GM10248 (cell line): ENCODE measurements at regions of chr1 and their contacts with region 1.

Region 1: DNA sequence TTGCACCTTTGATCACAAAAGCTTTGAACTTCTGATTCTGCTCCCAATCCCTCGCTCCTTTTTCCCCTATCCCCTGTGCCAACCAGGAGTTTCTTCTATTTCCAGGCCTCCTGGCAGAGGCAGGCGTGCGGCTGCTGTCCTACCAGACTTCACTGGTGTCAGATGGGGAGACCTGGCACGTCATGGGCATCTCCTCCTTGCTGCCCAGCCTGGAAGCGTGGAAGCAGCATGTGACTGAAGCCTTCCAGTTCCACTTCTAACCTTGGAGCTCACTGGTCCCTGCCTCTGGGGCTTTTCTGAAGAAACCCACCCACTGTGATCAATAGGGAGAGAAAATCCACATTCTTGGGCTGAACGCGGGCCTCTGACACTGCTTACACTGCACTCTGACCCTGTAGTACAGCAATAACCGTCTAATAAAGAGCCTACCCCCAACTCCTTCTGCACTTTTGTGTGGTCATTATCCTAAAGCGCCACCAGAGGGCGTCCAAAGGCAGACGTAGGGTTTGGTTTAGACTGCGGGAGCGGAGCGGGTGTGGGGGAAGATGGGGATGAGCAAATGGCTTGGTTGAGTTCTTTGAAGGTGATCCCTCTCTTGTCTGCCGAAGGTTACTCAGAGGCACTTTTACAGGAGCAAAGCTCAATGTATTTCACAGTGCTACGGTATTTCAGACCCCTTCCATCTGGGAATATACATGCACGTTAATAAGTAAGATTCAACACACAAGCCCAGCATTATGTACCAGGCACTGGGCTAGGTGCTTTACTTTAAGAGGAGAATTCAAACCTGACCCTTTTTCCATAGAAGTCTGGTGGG is 24.7 kb downstream of the HMGCS2 start:
- DNase-seq: peak; percentile 80
- CTCF ChIP-seq: peak; percentile 78

Region 2: DNA sequence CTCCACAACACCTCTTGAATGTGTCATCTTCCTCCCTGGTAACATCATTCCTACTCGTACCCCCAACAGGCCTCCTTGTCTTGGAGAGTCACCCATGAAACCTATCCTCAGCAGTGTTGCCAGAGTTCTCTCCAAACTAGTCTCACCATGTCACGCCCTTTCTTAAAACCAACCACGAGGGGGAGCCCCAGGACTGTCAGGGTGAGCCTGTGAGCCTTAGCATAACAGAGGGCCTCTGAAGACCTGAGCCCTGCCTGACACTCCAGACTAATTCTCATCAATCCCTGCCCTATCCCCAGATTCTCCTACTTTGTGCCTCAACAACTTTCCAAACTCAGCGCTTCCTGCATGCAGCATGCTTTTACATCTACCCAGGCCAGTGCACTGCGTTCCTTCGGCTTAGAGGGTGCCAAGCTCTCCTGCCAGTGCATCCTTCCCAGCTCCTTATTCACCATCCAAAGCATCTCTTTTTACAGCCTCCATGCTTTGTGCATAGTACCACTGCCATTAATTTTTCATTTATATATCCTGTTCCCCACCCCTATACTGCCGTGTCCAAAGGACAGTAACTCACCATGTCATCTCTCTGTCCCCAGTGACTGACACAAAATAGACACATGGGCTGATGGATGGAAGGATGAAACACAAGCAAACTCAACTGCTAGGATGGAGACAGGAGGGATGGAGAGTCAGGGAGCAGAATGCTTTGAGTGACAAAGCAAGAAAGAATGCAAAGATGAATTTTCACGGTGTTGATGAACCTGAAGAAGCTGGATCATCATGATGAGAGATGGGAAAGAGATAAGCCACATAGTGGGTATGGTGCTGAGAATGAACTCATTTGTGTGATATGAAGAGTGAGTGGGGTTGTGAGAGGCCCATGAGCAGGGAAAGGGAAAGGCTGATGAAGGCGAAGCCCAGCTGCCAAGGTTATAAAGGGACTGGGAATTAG is 129.9 kb before region 1 on chr1:
- CTCF ChIA-PET with region 1: interaction called, 10 read pairs
- POLR2A ChIA-PET with region 1: no interaction called
- DNase-seq: peak; percentile 67
- CTCF ChIP-seq: peak; percentile 75

Region 3: GRCh38 chr1:119660298-119661083 is 83.5 kb before region 1 on chr1:
- CTCF ChIA-PET with region 1: no interaction called
- POLR2A ChIA-PET with region 1: no interaction called
- DNase-seq: no peak
- CTCF ChIP-seq: no peak

Region 4: DNA sequence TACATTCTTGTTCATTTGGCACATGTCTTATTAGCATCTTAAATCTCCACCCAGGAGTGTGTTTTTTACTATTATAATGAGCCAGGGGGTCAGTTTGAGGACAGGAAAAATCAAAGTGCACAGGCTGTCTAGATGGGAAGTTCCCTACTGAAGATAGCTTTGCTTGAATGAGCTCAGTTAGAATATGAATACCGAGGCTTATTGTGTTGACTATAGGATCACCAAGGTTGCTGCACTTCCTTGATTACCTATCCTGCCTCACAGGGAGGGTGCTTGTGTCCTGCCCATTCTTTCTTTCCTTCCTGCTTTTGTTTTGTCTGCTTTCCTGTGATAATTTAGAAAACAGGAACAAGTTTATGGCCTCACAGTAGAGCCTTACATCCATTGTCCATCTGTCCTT is 16.0 kb before region 1 on chr1:
- CTCF ChIA-PET with region 1: interaction called, 35 read pairs
- POLR2A ChIA-PET with region 1: no interaction called
- DNase-seq: no peak
- CTCF ChIP-seq: no peak

Region 5: GRCh38 chr1:119758584-119758983 is 14.6 kb after region 1 on chr1:
- CTCF ChIA-PET with region 1: interaction called, 32 read pairs
- POLR2A ChIA-PET with region 1: no interaction called
- DNase-seq: no peak
- CTCF ChIP-seq: no peak

Region 6: DNA sequence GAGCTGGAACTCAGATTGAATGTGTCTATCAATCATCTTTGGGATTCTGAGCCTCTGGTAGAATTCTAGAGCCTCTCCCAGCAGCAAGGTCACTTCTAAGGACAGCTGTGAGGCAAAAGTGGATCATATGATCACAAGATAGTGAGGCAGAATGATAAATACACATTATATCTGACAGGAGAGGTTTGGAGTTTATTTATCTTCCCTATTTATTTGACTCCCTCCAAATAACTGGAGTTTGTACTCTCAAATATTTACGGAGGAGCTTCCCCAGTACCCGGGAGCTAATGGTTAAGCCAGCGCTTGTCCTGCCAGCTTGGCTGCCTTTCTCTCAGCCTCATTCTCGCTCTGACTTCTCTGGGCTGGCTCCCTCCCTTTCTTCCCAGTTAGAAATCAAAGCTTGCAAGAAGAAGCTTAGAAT is 22.4 kb after region 1 on chr1:
- CTCF ChIA-PET with region 1: interaction called, 23 read pairs
- POLR2A ChIA-PET with region 1: no interaction called
- DNase-seq: no peak
- CTCF ChIP-seq: no peak